K562 (cell line): ENCODE measurements at regions of chr9 and their contacts with region 1.

Region 1: GRCh38 chr9:78314953-78315870 is 18.3 kb downstream of the PSAT1 start:
- DNase-seq: no peak
- ATAC-seq: no peak
- H3K4me3 ChIP-seq: no peak overlapping the region
- H3K27ac ChIP-seq: no peak overlapping the region
- H3K4me1 ChIP-seq: no peaks in the 10 kb centered on the region; a peak in 1 of 5 replicates
- H3K27me3 ChIP-seq: no peaks in the 10 kb centered on the region
- CTCF ChIP-seq: no peak
- EP300 ChIP-seq: no peak
- POLR2A ChIP-seq: no peak
- RAD21 ChIP-seq: no peak

Region 2: GRCh38 chr9:77977210-77977611 is 338.0 kb before region 1 on chr9:
- CTCF ChIA-PET with region 1: no interaction called
- POLR2A ChIA-PET with region 1: no interaction called
- in situ Hi-C with region 1: no loop called
- intact Hi-C with region 1: no loop called
- DNase-seq: peak; percentile 28 to 73 (median 41)
- ATAC-seq: peak; percentile 80
- H3K4me3 ChIP-seq: no peak overlapping the region
- H3K27ac ChIP-seq: peak overlapping the region; percentile 62; the same call in 1 of the 3 replicates
- H3K4me1 ChIP-seq: peaks cover 10 to 36% of the 10 kb centered on the region in 2 experiments; a peak in 4 of 5 replicates
- H3K27me3 ChIP-seq: no peaks in the 10 kb centered on the region
- CTCF ChIP-seq: peak; percentile 57 to 75 (median 68)
- EP300 ChIP-seq: no peak
- POLR2A ChIP-seq: no peak
- RAD21 ChIP-seq: peak; percentile 72 to 85

Region 3: GRCh38 chr9:78296893-78297671 is 18.1 kb before region 1 on chr9 and contains the start of gene PSAT1:
- CTCF ChIA-PET with region 1: no interaction called
- POLR2A ChIA-PET with region 1: interaction called, 13 read pairs
- in situ Hi-C with region 1: no loop called
- intact Hi-C with region 1: no loop called
- DNase-seq: peak; percentile 92 to 96 (median 95)
- ATAC-seq: peak; percentile 98
- H3K4me3 ChIP-seq: peak within 1 kb of the TSS; percentile 73
- H3K27ac ChIP-seq: peak within 1 kb of the TSS; percentile 84
- H3K4me1 ChIP-seq: peaks cover 4 to 15% of the 10 kb centered on the region in 2 experiments; a peak in 4 of 5 replicates
- H3K27me3 ChIP-seq: no peaks in the 10 kb centered on the region
- CTCF ChIP-seq: no peak
- EP300 ChIP-seq: no peak; the same call in 1 of the 2 replicates
- POLR2A ChIP-seq: peak; percentile 76; the same call in 1 of the 2 replicates
- RAD21 ChIP-seq: no peak
- polyA plus RNA-seq, gene PSAT1: 146 to 151 TPM

Region 4: DNA sequence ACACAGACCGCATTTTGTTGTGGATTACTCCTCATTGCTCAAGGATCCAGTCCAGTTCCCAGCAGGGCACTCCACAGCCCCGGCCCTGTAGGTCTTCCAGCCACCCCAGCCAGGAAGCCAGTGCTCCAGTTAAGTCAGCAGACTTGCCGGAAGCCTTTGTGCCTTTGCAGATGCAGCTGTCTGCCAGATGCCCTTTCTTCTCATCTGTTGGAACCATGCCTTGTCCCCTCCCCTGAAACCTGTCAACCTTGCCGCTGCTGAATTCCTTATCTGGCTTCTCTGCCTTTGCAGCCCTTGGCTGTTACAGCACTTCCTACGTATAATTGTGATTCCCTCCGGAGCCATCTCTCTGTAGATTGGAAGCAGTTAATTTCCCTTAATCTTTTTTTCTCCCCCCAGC is 10.1 kb after region 1 on chr9:
- CTCF ChIA-PET with region 1: no interaction called
- POLR2A ChIA-PET with region 1: interaction called, 11 read pairs
- in situ Hi-C with region 1: no loop called
- intact Hi-C with region 1: no loop called
- DNase-seq: peak; percentile 14 to 82 (median 44)
- ATAC-seq: peak; percentile 76
- H3K4me3 ChIP-seq: no peak overlapping the region
- H3K27ac ChIP-seq: peak overlapping the region; percentile 60; the same call in 2 of the 3 replicates
- H3K4me1 ChIP-seq: peaks cover 0 to 15% of the 10 kb centered on the region in 2 experiments; a peak in 3 of 5 replicates
- H3K27me3 ChIP-seq: no peaks in the 10 kb centered on the region
- CTCF ChIP-seq: no peak
- EP300 ChIP-seq: no peak
- POLR2A ChIP-seq: no peak
- RAD21 ChIP-seq: no peak